ENCODE measurements at regions of chr3 and their contacts with region 1.

Region 1: DNA sequence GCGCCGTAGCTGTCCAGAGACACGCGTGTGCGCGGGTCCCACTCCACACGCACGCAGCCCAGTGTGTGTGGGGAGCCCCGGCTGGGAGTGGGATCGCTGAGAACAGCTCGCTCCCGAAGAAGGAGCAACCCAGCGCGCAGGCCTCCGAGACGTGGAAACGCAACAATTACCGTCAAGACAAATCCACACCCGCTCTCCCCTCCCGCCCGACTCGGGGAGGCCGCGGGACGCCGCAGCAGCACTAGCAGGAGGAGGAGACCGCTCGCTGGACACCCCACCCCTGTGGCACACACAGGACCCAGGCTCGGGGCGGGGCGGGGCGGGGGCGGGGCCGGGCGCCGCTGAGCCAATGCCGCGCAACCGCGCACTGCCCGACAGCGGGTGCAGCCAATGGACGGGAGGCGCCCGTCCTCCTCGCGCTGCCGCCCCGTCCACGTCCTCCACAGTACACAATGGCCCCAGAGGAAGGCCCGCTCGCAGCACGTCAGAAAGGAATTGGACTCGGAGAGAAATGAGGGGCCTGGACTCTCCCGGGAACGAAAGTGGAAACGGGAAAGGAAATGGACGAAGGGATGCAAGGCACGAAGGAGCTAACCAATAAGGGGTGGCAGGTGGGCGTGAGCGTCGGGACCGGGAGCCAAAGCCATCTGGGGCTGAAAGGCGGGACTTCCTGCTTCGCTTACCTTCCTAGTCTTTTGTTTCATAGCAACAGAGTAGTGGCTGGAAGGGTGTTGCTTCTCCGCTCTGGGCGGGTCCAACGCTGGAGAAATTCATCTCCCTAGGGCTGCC is at the start of gene CBLB:
- DNase-seq: peak; percentile 84 to 93
- ATAC-seq: peak; percentile 83 to 97 (median 90)
- H3K4me3 ChIP-seq: peak within 1 kb of the TSS; percentile 99
- H3K4me3 Mint-ChIP-seq: peak within 1 kb of the TSS; percentile 100
- H3K27ac ChIP-seq: peak within 1 kb of the TSS; percentile 91
- H3K27ac Mint-ChIP-seq: peak within 1 kb of the TSS; percentile 95 to 97
- H3K4me1 ChIP-seq: peaks cover 3% of the 10 kb centered on the region
- H3K4me1 Mint-ChIP-seq: peaks cover 59 to 62% of the 10 kb centered on the region in 2 donors
- H3K27me3 ChIP-seq: no peaks in the 10 kb centered on the region
- H3K27me3 Mint-ChIP-seq: no peaks in the 10 kb centered on the region
- CTCF ChIP-seq: no peak
- total RNA-seq, gene CBLB: 180 to 287 (median 230) TPM

Region 2: GRCh38 chr3:105686278-105686897 is 182.5 kb before region 1 on chr3:
- intact Hi-C with region 1: loop called (anchors 2 kb)
- DNase-seq: peak in 1 of 2 donors; percentile 61
- ATAC-seq: peak; percentile 70 to 81 (median 75)
- H3K4me3 ChIP-seq: no peak overlapping the region
- H3K4me3 Mint-ChIP-seq: no peak overlapping the region
- H3K27ac ChIP-seq: no peak overlapping the region
- H3K27ac Mint-ChIP-seq: peak overlapping the region; percentile 70 to 88
- H3K4me1 ChIP-seq: no peaks in the 10 kb centered on the region
- H3K4me1 Mint-ChIP-seq: peaks cover 16 to 24% of the 10 kb centered on the region in 2 donors
- H3K27me3 ChIP-seq: no peaks in the 10 kb centered on the region
- H3K27me3 Mint-ChIP-seq: no peaks in the 10 kb centered on the region
- CTCF ChIP-seq: peak; percentile 97

Region 3: DNA sequence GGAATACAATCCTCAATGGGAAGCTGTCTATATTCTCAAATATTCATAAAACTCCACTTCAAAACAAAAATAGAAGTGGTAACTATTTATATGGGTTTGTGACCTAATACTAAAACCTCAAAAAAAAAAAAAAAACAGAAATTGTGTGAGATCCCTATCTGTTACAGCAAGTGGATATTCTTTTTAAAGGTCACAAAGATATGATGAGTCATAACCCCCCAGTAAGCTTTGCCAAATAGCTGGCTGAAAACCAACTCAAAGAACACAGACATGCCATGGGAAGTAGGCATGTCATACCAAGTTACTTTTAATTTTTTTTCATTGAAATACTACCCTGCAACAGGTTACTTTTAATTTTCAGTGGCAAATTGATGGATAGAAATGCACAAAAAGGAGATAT is 62.6 kb before region 1 on chr3:
- intact Hi-C with region 1: loop called (anchors 2 kb)
- DNase-seq: peak in 1 of 2 donors; percentile 70
- ATAC-seq: peak; percentile 82 to 86 (median 86)
- H3K4me3 ChIP-seq: no peak overlapping the region
- H3K4me3 Mint-ChIP-seq: peak overlapping the region; percentile 67
- H3K27ac ChIP-seq: peak overlapping the region; percentile 42
- H3K27ac Mint-ChIP-seq: peak overlapping the region; percentile 75 to 89
- H3K4me1 ChIP-seq: peaks cover 12% of the 10 kb centered on the region
- H3K4me1 Mint-ChIP-seq: peaks cover 59 to 65% of the 10 kb centered on the region in 2 donors
- H3K27me3 ChIP-seq: no peaks in the 10 kb centered on the region
- H3K27me3 Mint-ChIP-seq: no peaks in the 10 kb centered on the region
- CTCF ChIP-seq: no peak

Region 4: GRCh38 chr3:105842943-105843342 is 26.0 kb before region 1 on chr3:
- intact Hi-C with region 1: loop called (anchors 2 kb)
- DNase-seq: no peak
- ATAC-seq: no peak
- H3K4me3 ChIP-seq: no peak overlapping the region
- H3K4me3 Mint-ChIP-seq: no peak overlapping the region
- H3K27ac ChIP-seq: no peak overlapping the region
- H3K27ac Mint-ChIP-seq: no peak overlapping the region
- H3K4me1 ChIP-seq: no peaks in the 10 kb centered on the region
- H3K4me1 Mint-ChIP-seq: peaks cover 67 to 69% of the 10 kb centered on the region in 2 donors
- H3K27me3 ChIP-seq: no peaks in the 10 kb centered on the region
- H3K27me3 Mint-ChIP-seq: no peaks in the 10 kb centered on the region
- CTCF ChIP-seq: no peak

Region 5: DNA sequence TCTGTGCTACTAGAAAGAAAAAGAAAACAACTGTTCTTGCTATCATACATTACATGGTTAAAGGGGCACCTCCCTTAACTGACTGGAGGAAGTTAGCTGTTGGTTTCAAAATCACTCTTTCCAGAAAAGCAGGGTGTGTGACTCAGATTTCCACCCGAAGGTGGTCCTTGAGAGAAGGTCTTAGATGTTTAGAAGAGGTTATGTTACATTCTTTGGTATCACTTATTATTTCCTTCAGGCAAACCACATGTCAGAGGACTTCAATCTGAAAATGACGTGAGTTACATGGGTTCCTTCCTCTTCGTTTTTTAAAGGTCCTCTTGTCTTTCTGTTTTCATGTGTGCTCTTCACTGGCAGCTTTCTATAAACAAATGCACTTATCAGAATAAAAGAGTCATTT is 307.8 kb after region 1 on chr3:
- intact Hi-C with region 1: loop called (anchors 5 kb)
- DNase-seq: peak in 1 of 2 donors; percentile 76
- ATAC-seq: peak; percentile 74 to 78 (median 76)
- H3K4me3 ChIP-seq: peak overlapping the region; percentile 29
- H3K4me3 Mint-ChIP-seq: peak overlapping the region; percentile 81
- H3K27ac ChIP-seq: peak overlapping the region; percentile 79
- H3K27ac Mint-ChIP-seq: peak overlapping the region; percentile 93
- H3K4me1 ChIP-seq: peaks cover 11% of the 10 kb centered on the region
- H3K4me1 Mint-ChIP-seq: peaks cover 42 to 47% of the 10 kb centered on the region in 2 donors
- H3K27me3 ChIP-seq: no peaks in the 10 kb centered on the region
- H3K27me3 Mint-ChIP-seq: no peaks in the 10 kb centered on the region
- CTCF ChIP-seq: no peak

Region 6: DNA sequence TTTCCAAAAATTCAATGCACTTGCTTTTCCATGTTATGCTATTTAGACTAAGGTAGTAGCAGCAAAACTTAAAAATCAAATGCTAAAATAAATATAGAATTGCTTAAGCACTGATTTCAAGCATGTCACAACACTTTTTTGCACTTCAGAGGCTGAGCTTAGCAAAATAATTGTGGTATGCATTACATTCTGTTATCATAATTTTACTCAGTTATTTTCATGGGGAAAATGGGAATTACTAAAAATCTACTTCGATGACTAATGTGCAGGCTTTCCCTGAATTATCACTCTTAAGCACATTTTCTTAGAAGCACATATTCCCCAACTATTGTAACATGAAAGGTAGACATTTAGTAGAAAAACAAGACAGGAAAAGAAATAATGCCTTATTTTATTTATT is 322.3 kb after region 1 on chr3:
- intact Hi-C with region 1: no loop called
- DNase-seq: no peak
- ATAC-seq: no peak
- H3K4me3 ChIP-seq: no peak overlapping the region
- H3K4me3 Mint-ChIP-seq: no peak overlapping the region
- H3K27ac ChIP-seq: no peak overlapping the region
- H3K27ac Mint-ChIP-seq: no peak overlapping the region
- H3K4me1 ChIP-seq: no peaks in the 10 kb centered on the region
- H3K4me1 Mint-ChIP-seq: peaks cover 2 to 5% of the 10 kb centered on the region in 2 donors
- H3K27me3 ChIP-seq: no peaks in the 10 kb centered on the region
- H3K27me3 Mint-ChIP-seq: no peaks in the 10 kb centered on the region
- CTCF ChIP-seq: no peak